Right ventricle myocardium superior (tissue), 1 donor: ENCODE measurements at regions of chr10 and their contacts with region 1.

Region 1: DNA sequence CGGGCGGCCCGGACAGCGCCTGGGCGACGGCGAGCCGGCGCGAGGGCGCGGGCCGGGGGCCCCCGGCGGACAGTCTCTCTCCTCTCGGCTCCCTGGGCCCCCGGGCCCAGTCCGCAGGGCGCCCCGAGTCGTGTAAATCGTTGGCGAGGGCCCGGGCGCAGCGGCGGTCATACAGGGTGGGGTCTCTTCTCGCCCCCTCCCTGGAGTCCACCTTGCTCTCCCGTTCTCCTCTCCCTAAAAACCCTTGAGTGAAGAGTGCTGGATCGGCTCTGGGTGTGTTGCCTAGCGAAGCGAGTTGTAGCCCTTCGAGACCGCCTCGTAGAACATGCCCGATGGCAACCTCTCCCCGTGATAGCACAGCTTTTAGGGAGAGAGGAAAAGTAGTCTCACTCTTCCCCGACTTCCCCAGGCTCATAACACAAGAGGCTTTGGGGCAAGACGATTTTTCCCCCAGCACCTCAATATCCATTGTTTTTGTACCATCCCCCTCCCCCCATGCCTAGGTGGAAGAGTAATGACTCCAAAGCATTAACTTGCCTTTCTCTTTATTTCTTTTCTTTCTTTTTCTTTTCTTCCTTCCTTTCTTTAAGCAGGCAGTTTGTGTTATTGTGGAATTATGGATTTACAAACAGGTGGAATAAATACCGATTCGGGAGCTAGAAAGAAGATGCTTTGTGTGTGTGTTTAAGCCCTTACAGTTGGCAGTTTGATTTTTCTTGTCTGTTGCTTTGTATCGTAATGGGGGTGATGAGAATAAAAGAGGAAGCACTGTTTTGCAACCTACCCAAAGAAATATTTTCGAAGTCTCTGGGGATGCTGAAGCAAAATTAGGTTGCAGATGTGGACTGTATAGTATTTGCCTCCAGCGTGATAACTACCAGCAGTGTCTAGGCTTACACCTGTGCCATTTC is 822 bp downstream of the SHOC2 start:
- DNase-seq: peak; percentile 53
- ATAC-seq: no peak

Region 2: GRCh38 chr10:110977662-110978061 is 57.4 kb after region 1 on chr10:
- intact Hi-C with region 1: loop called (anchors 10 kb)
- DNase-seq: no peak
- ATAC-seq: peak; percentile 76